Activated naive CD4-positive, alpha-beta T cell treated with anti-CD3 and anti-CD28 coated beads, Interleukin-2, amount 10 ng/mL, durations not matched to agents 7 days and 5 days (primary cell): ENCODE measurements at regions of chr2 and their contacts with region 1.

Region 1: GRCh38 chr2:131413148-131413747 is 49.3 kb upstream of the RAB6D start:
- DNase-seq: peak; percentile 31
- H3K4me3 Mint-ChIP-seq: no peak overlapping the region
- H3K27ac Mint-ChIP-seq: no peak overlapping the region
- H3K4me1 Mint-ChIP-seq: no peaks in the 10 kb centered on the region
- H3K27me3 Mint-ChIP-seq: peaks cover 27% of the 10 kb centered on the region

Region 2: DNA sequence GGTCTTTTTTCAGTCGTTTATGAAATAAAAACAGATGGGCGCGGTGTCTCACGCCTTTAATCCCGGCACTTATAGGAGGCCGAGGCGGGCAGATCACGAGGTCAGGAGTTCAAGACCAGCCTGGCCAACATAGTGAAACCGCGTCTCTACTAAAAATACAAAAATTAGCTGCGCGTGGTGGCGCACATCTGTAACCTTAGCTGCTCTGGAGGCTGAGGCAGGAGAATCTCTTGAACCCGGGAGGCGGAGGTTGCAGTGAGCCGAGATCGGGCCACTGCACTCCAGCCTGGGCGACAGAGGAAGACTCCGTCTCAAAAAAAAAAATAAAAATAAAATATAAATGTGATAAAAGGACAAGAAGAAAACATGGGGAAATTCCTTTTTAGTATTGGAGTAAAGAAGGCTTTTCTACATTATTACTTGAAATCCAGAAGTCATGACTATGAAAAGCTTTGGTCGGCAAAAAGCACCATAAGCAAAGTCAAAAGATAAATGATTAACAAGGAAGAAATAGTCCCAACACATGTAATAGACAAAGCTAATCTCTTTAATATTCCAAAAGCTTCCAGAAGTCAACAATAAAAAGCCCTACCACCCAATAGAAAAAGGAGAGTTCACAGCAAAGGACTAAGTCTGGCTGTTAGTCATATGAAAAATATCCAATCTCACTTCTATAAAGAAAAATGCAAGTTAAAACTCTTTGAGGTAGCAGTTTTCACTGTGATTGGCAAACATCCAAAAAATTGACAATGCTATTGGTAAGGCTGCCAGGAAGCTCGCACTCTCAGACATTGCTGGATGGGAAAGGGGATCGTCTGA is 318.6 kb before region 1 on chr2:
- CTCF ChIA-PET with region 1: no interaction called
- DNase-seq: no peak
- H3K4me3 Mint-ChIP-seq: peak overlapping the region; percentile 87
- H3K27ac Mint-ChIP-seq: peak overlapping the region; percentile 93
- H3K4me1 Mint-ChIP-seq: peaks cover 22% of the 10 kb centered on the region
- H3K27me3 Mint-ChIP-seq: no peaks in the 10 kb centered on the region

Region 3: DNA sequence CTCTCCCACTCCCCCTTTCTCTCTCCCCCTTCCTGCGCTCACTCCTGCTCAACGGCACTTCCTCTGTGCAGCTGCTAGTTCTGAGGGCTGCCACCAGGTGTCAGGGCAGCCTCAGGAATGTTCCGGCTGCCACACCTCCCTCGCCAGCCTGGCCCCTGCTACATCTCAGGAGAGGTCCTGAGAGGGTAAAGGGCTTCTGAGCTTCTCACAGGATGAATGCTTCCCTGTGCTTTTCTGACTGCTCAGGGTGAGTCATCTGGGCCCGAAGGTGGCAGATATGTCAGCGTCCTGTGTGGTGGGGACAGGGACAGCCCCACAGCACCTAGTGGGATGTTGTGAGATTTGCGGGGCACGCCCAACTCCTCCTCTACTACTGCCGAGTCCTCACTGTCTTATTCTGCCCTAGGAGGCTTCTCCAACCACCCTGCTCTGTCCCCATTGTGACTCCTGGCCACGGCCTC is 259.1 kb before region 1 on chr2:
- CTCF ChIA-PET with region 1: interaction called, 10 read pairs
- DNase-seq: peak; percentile 73
- H3K4me3 Mint-ChIP-seq: no peak overlapping the region
- H3K27ac Mint-ChIP-seq: no peak overlapping the region
- H3K4me1 Mint-ChIP-seq: peaks cover 35% of the 10 kb centered on the region
- H3K27me3 Mint-ChIP-seq: no peaks in the 10 kb centered on the region